Mammary epithelial cell (primary cell): ENCODE measurements at regions of chr2 and their contacts with region 1.

Region 1: GRCh38 chr2:111128096-111128495 is 7.4 kb downstream of the BCL2L11 start:
- DNase-seq: no peak
- H3K4me3 ChIP-seq: no peak overlapping the region
- H3K27ac ChIP-seq: no peak overlapping the region
- H3K4me1 ChIP-seq: peaks cover 9% of the 10 kb centered on the region
- H3K27me3 ChIP-seq: no peaks in the 10 kb centered on the region
- CTCF ChIP-seq: no peak

Region 2: DNA sequence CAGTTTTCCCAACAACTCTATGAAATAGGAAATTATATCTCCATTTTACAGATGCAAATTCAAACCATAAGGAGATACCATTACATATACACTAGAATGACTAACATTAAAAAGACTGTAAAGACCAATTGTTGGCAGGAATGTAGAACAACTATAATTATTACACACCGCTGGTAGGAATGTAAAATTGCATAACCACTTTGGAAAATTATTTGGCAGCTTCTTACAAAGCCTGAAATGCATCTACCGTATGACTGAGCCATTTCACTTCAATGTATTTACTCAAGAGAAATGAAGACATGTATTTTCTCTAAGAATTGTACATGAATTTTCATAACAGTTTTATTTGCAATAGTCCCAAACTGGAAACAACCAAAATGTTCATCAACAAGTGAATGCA is 196.4 kb before region 1 on chr2:
- CTCF ChIA-PET with region 1: no interaction called
- dilution Hi-C with region 1: no loop called
- in situ Hi-C with region 1: no loop called
- intact Hi-C with region 1: no loop called
- DNase-seq: peak; percentile 61
- H3K4me3 ChIP-seq: no peak overlapping the region
- H3K27ac ChIP-seq: no peak overlapping the region
- H3K4me1 ChIP-seq: no peaks in the 10 kb centered on the region
- H3K27me3 ChIP-seq: peaks cover 3% of the 10 kb centered on the region
- CTCF ChIP-seq: peak in 1 of 2 donors; percentile 10

Region 3: GRCh38 chr2:111185638-111186022 is 57.5 kb after region 1 on chr2:
- CTCF ChIA-PET with region 1: no interaction called
- dilution Hi-C with region 1: no loop called
- in situ Hi-C with region 1: no loop called
- intact Hi-C with region 1: loop called (anchors 5 kb)
- DNase-seq: no peak
- H3K4me3 ChIP-seq: no peak overlapping the region
- H3K27ac ChIP-seq: no peak overlapping the region
- H3K4me1 ChIP-seq: no peaks in the 10 kb centered on the region
- H3K27me3 ChIP-seq: no peaks in the 10 kb centered on the region
- CTCF ChIP-seq: no peak